MCF 10A (cell line): ENCODE measurements at regions of chr10 and their contacts with region 1.

Region 1: DNA sequence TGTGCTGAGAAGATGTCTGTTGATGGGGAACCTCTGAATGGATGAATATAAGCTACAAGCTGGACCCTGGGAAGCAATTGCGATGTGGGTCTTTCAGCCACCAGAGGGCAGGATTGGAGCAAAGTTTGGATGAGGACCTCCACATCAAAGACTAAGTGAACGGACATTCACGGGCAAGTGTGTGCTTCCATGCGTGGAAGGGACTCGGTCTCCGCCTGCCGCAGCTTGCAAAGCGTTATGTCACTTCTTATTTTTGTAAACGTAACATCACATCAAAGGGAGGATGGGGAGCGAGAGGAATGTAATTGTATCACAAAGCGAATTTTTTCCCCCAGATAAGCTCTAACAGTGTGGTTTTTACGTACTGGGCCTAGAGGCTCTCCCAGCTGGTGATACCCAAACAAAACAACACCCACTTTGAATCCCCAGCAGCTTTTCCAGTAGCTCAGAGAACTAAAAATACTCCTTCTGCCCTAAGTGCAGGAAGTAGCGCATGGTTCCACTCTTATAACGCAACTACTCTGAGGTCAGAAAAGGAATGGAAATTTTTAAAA is 65.0 kb downstream of the VWA2 start:
- DNase-seq: peak; percentile 84
- H3K4me3 Mint-ChIP-seq: no peak overlapping the region
- H3K27ac Mint-ChIP-seq: no peak overlapping the region
- H3K4me1 Mint-ChIP-seq: peaks cover 20% of the 10 kb centered on the region
- H3K27me3 Mint-ChIP-seq: no peaks in the 10 kb centered on the region
- CTCF ChIP-seq: peak; percentile 79

Region 2: GRCh38 chr10:114281461-114281860 is 22.6 kb before region 1 on chr10:
- CTCF ChIA-PET with region 1: interaction called, 13 read pairs
- POLR2A ChIA-PET with region 1: no interaction called
- intact Hi-C with region 1: no loop called
- DNase-seq: no peak
- H3K4me3 Mint-ChIP-seq: no peak overlapping the region
- H3K27ac Mint-ChIP-seq: no peak overlapping the region
- H3K4me1 Mint-ChIP-seq: no peaks in the 10 kb centered on the region
- H3K27me3 Mint-ChIP-seq: no peaks in the 10 kb centered on the region
- CTCF ChIP-seq: no peak

Region 3: GRCh38 chr10:114343623-114344505 is 39.8 kb after region 1 on chr10:
- CTCF ChIA-PET with region 1: interaction called, 11 read pairs
- POLR2A ChIA-PET with region 1: no interaction called
- intact Hi-C with region 1: no loop called
- DNase-seq: no peak
- H3K4me3 Mint-ChIP-seq: no peak overlapping the region
- H3K27ac Mint-ChIP-seq: no peak overlapping the region
- H3K4me1 Mint-ChIP-seq: no peaks in the 10 kb centered on the region
- H3K27me3 Mint-ChIP-seq: no peaks in the 10 kb centered on the region
- CTCF ChIP-seq: no peak

Region 4: DNA sequence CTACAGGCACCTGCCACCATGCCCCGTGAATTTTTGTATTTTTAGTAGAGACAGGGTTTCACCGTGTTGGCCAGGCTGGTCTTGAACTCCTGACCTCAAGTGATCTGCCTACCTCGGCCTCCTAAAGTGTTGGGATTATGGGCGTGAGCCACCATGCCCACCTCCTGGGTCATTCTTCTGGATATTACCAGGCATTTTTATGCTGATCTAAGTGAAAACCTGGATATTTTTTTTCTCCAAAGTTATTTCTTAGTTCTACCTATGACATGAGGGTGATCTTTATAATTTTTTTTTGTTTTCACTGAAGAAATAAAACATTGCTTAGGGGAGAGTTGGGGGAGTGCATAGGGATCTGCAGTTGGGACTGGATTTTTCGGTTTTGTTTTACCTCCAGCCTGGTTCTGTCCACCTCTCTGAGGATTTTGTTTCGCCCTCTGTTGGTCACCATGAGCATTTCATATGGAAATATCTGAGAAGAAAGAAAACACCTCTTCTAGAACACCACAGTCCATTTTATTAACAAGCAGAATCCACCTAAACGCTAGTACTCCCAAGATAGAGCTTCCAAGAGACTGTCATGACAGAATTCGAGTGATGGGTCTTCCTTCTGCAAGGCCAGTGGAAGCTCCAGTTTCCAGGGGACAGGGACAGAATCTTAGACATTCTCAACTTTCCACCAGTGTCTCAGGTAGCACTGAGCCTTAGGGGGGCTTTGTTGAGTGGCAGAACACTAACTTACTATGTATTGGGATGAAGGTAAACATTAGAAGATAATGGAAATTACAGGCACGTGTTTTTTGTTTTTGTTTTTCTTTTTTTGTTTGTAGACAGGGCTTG is 133.6 kb after region 1 on chr10:
- CTCF ChIA-PET with region 1: interaction called, 146 read pairs
- POLR2A ChIA-PET with region 1: interaction called, 4 read pairs
- intact Hi-C with region 1: loop called (anchors 1 kb)
- DNase-seq: peak; percentile 36
- H3K4me3 Mint-ChIP-seq: no peak overlapping the region
- H3K27ac Mint-ChIP-seq: peak overlapping the region; percentile 6
- H3K4me1 Mint-ChIP-seq: no peaks in the 10 kb centered on the region
- H3K27me3 Mint-ChIP-seq: no peaks in the 10 kb centered on the region
- CTCF ChIP-seq: peak; percentile 47

Region 5: DNA sequence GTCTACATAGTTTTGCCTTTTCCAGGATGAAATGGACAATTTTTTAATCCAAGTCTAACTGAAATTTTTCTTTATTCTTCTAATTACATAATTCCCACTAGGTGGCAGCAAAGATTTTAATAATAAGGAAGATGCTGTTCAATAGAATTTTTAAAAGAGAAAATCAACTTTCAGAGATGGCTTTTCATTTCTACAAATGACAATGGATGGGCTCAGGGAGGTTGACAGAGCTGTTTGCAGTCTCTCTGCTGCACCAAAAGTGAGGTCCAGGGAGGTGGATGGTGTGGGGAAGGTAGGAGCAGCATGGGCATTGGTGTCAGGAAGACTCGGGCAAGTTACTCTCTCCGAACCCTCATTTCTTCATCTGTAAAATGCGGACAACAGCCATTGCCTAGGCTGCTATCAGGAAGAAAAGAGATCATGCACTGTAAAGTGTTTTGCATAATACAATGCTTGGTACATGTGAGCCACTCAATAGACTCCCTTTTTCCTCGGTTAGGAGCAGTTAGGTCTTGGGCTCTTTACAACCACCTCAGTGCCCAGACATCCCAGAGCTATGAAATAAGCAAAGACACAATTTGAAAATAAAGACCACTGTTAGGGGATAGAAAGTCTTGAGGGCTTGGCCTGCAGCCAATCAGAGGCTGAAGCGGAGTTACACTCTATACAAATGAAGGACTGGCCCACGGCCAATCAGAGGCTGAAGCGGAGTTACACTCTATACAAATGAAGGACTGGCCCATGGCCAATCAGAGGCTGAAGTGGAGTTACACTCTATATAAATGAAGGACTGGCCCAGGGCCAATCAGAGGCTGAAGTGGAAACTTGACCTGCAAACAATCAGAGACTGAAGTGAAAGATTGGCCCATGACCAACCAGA is 246.9 kb after region 1 on chr10:
- CTCF ChIA-PET with region 1: interaction called, 10 read pairs
- POLR2A ChIA-PET with region 1: no interaction called
- intact Hi-C with region 1: loop called (anchors 1 kb)
- DNase-seq: peak; percentile 39
- H3K4me3 Mint-ChIP-seq: no peak overlapping the region
- H3K27ac Mint-ChIP-seq: no peak overlapping the region
- H3K4me1 Mint-ChIP-seq: peaks cover 13% of the 10 kb centered on the region
- H3K27me3 Mint-ChIP-seq: no peaks in the 10 kb centered on the region
- CTCF ChIP-seq: peak; percentile 42

Region 6: DNA sequence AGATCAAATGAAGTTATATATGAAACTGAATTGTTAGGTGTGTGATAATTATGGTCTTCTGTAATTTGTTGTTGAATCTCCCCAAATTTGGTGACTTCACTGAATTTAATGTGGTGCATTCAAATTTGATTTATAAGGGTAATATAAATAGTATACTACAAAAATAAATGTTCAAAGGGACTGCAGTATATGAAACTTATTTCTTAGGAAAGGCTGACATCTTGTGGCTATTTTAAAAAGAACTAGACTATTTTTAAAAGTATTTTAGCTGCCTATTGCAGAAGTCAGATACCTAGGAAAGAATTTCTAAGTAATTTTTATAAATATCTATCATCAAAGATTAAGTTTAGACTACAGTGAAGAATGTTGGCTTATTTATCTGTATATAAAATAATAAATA is 825.7 kb after region 1 on chr10:
- CTCF ChIA-PET with region 1: interaction called, 4 read pairs
- POLR2A ChIA-PET with region 1: no interaction called
- intact Hi-C with region 1: loop called (anchors 2 kb)
- DNase-seq: peak; percentile 26
- H3K4me3 Mint-ChIP-seq: no peak overlapping the region
- H3K27ac Mint-ChIP-seq: no peak overlapping the region
- H3K4me1 Mint-ChIP-seq: no peaks in the 10 kb centered on the region
- H3K27me3 Mint-ChIP-seq: peaks cover 14% of the 10 kb centered on the region
- CTCF ChIP-seq: peak; percentile 46